ENCODE measurements at regions of chr5 and their contacts with region 1.

Region 1: DNA sequence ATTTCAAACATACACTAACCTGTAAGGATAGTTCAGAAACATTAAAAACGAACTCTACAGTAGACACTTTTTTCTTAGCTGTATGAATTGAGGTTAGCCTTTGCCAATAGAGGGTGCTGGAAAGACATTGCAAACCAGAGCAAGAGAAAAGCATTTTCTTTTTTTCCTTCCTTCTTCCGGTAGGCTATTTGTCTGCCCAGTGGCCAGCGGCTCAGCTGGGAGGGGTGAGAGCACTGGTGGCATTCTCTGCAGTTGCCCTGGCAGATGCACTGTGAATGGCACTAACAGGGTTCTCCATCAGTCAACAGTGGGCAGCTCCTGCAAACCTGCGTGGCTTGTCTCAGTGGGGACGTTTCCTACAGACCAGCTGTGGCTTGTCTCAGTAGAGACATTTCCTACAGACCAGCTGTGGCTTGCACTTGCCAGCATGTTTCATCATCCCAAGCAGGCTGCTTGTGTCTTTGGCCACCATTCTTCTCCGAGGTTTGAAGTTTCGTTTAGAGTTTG is 984.5 kb upstream of the CDH18 start:
- DNase-seq: peak; percentile 61
- H3K4me3 Mint-ChIP-seq: peak overlapping the region; percentile 59
- H3K27ac Mint-ChIP-seq: peak overlapping the region; percentile 67
- H3K4me1 Mint-ChIP-seq: no peaks in the 10 kb centered on the region
- H3K27me3 Mint-ChIP-seq: no peaks in the 10 kb centered on the region
- CTCF ChIP-seq: no peak

Region 2: DNA sequence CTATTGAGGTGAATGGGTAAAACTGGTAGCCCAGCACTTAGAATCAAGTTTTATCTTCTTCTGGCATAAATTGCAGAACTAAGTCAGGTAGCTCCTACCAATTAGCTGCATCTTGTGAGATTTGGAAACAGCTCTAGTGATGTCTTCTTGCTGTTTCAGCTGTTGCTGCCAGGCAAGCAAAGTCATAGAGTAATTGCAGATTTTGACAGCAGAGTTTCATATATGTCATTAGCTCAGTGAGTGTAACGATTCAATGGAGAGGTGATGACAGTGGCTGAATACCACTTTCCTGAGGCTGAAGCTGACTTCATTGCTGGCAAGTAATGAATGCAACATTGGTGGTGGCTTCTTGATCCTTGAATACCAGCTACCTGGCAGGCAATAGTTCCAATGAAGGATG is 125.2 kb after region 1 on chr5:
- CTCF ChIA-PET with region 1: no interaction called
- intact Hi-C with region 1: no loop called
- DNase-seq: no peak
- H3K4me3 Mint-ChIP-seq: no peak overlapping the region
- H3K27ac Mint-ChIP-seq: no peak overlapping the region
- H3K4me1 Mint-ChIP-seq: no peaks in the 10 kb centered on the region
- H3K27me3 Mint-ChIP-seq: no peaks in the 10 kb centered on the region
- CTCF ChIP-seq: no peak

Region 3: DNA sequence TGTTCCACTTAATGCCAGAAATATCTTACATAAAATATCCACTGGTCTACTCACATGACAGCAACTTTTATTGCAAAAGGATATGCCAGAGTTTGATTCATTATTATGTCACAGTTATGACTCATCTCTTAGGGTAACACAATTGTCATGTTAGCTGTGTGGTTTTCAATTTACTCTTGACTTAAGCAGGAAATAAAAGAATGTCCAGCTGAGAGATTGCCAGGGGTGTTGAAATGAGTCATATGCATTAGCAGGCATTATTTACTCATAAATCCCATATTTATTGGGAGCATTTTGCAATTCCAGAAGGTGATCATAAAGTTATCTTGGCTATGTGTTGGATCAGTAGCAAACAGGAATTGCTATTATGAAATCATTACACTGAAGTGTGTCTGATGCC is 180.1 kb after region 1 on chr5:
- CTCF ChIA-PET with region 1: no interaction called
- intact Hi-C with region 1: loop called (anchors 10 kb)
- DNase-seq: peak; percentile 26
- H3K4me3 Mint-ChIP-seq: no peak overlapping the region
- H3K27ac Mint-ChIP-seq: no peak overlapping the region
- H3K4me1 Mint-ChIP-seq: peaks cover 21% of the 10 kb centered on the region
- H3K27me3 Mint-ChIP-seq: no peaks in the 10 kb centered on the region
- CTCF ChIP-seq: no peak

Region 4: DNA sequence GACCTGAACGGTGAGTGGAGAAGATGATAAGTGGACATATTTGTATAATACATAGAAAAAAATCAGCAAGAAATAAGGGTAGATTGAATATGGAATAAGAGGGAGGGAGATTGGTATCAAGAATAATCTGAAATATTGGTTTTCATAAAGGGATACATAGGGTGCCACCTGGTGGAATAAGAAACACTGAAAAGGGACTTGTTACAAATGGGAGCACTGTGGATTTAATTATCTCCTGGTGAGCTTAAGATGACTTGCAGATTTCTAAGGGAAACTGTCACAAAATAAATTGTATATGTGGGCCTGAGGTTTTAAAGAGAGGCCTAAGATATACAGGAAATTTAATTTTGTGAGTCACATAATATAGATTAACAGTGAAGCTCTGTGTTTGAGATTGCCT is 419.0 kb after region 1 on chr5:
- CTCF ChIA-PET with region 1: interaction called, 8 read pairs
- intact Hi-C with region 1: loop called (anchors 1 kb)
- DNase-seq: peak; percentile 13
- H3K4me3 Mint-ChIP-seq: no peak overlapping the region
- H3K27ac Mint-ChIP-seq: peak overlapping the region; percentile 5
- H3K4me1 Mint-ChIP-seq: peaks cover 13% of the 10 kb centered on the region
- H3K27me3 Mint-ChIP-seq: no peaks in the 10 kb centered on the region
- CTCF ChIP-seq: no peak

Region 5: GRCh38 chr5:21452449-21452848 is 480.0 kb after region 1 on chr5:
- CTCF ChIA-PET with region 1: no interaction called
- intact Hi-C with region 1: loop called (anchors 5 kb)
- DNase-seq: no peak
- H3K4me3 Mint-ChIP-seq: no peak overlapping the region
- H3K27ac Mint-ChIP-seq: no peak overlapping the region
- H3K4me1 Mint-ChIP-seq: no peaks in the 10 kb centered on the region
- H3K27me3 Mint-ChIP-seq: no peaks in the 10 kb centered on the region
- CTCF ChIP-seq: no peak

Region 6: GRCh38 chr5:21802869-21803490 is 830.5 kb after region 1 on chr5:
- CTCF ChIA-PET with region 1: no interaction called
- intact Hi-C with region 1: loop called (anchors 2 kb)
- DNase-seq: no peak
- H3K4me3 Mint-ChIP-seq: no peak overlapping the region
- H3K27ac Mint-ChIP-seq: no peak overlapping the region
- H3K4me1 Mint-ChIP-seq: peaks cover 17% of the 10 kb centered on the region
- H3K27me3 Mint-ChIP-seq: no peaks in the 10 kb centered on the region
- CTCF ChIP-seq: peak; percentile 78

Measured in Calu3 (cell line).